Ascending aorta (tissue), 2 donors: ENCODE measurements at regions of chr5 and their contacts with region 1.

Region 1: DNA sequence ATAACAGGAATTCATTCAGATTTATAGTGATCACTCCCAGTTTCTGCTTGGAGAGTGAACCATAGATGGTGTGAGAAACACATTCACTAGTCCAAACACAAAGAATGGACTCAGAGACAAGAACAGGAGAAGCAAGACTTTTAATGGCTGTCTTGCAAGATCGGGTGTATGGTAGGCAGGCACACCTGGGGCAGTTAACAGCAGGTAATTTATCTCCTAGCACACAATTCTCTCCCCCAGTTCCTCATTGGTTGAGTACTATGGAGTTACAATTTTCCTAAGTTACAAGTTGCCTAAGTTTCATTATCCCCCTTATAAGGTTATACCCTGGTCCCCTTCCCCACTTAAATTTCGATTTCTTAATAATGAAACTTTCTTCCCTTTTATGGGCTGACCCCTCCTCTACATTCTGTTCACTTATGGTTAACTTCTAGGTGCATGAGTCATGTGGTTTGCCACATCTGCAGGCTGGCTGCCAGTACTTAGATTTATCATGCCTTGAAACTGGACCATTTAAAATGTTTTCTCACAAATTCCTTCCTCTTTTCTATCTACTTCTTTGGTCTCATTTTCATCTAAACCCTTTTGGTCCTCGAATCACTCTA is 623.3 kb downstream of the HINT1 start:
- DNase-seq: no peak
- H3K4me3 ChIP-seq: no peak overlapping the region
- H3K27ac ChIP-seq: peak overlapping the region; percentile 2 to 49
- H3K4me1 ChIP-seq: no peaks in the 10 kb centered on the region
- H3K27me3 ChIP-seq: no peaks in the 10 kb centered on the region
- CTCF ChIP-seq: no peak

Region 2: GRCh38 chr5:130024006-130024405 is 517.7 kb before region 1 on chr5:
- intact Hi-C with region 1: loop called (anchors 10 kb)
- DNase-seq: no peak
- H3K4me3 ChIP-seq: no peak overlapping the region
- H3K27ac ChIP-seq: peak overlapping the region; percentile 49 to 66
- H3K4me1 ChIP-seq: peaks cover 0 to 4% of the 10 kb centered on the region in 2 donors
- H3K27me3 ChIP-seq: no peaks in the 10 kb centered on the region
- CTCF ChIP-seq: no peak

Region 3: GRCh38 chr5:130109152-130109551 is 432.6 kb before region 1 on chr5:
- intact Hi-C with region 1: loop called (anchors 10 kb)
- DNase-seq: no peak
- H3K4me3 ChIP-seq: no peak overlapping the region
- H3K27ac ChIP-seq: no peak overlapping the region
- H3K4me1 ChIP-seq: no peaks in the 10 kb centered on the region
- H3K27me3 ChIP-seq: no peaks in the 10 kb centered on the region
- CTCF ChIP-seq: peak; percentile 20 to 54 (median 52)

Region 4: DNA sequence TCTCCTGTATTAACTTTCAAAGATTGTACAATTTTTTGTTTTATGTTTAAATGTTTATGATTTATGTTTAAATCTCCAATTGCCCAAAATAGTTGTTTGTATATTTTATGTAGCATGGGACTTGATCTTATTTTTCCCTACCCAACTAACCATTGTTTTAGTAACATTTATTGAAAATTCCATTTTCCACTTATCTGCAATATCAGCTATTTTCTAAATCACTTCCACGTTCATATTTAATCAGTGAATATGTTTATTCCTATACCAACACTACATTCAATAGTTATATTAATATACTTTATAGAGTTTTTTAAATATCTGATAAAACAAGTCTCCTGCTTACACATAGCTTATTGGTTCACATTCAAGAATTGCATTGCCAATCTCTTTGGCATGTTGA is 105.3 kb before region 1 on chr5:
- intact Hi-C with region 1: no loop called
- DNase-seq: no peak
- H3K4me3 ChIP-seq: no peak overlapping the region
- H3K27ac ChIP-seq: no peak overlapping the region
- H3K4me1 ChIP-seq: no peaks in the 10 kb centered on the region
- H3K27me3 ChIP-seq: no peaks in the 10 kb centered on the region
- CTCF ChIP-seq: no peak